ENCODE measurements at regions of chr6 and their contacts with region 1.

Region 1: DNA sequence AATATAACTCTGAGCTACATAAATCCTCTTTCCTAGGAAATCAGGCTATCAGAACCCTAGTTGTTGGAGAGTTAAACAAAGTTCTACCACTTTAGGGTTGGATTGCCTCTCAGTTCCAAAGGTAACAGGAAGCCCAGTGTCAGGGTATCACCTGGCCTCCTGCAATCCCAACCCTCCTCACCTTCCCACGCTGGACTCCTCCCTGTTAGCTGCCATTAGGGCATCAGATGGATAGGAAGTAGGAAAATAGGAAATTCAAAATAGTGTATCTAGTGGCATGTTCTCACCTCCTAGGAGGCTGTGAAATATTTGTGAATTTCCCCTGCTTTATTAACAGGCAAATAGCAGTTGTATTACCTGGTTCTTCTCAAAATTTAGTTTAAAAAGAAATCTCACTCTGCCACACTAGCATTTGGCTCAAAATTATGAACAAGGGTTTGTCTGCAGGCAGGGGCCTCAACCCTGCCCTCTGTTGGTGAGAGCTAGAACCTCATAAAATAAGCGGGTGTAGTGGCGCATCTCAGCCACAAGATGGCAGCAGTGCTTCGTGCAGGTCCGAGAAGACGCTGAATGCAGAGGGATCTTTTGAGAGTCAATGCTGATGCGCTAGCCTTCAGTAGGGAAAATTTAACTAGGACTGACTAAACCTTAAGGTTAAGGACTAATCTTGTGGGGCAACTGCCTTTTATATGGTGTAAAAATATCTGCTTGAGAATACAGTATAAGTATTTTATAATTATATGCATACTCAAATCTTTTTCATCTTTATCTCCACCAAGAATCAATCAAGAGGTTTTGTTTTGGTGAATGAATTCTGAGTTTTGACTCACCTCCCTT is 209.8 kb upstream of the KCNQ5 start:
- DNase-seq: peak; percentile 76
- H3K4me3 ChIP-seq: no peak overlapping the region
- H3K27ac ChIP-seq: no peak overlapping the region
- H3K4me1 ChIP-seq: peaks cover 6% of the 10 kb centered on the region
- CTCF ChIP-seq: peak; percentile 100

Region 2: GRCh38 chr6:72580281-72580940 is 168.3 kb after region 1 on chr6:
- CTCF ChIA-PET with region 1: no interaction called
- POLR2A ChIA-PET with region 1: no interaction called
- intact Hi-C with region 1: loop called (anchors 10 kb)
- DNase-seq: peak; percentile 41
- H3K4me3 ChIP-seq: no peak overlapping the region
- H3K27ac ChIP-seq: no peak overlapping the region
- H3K4me1 ChIP-seq: no peaks in the 10 kb centered on the region
- CTCF ChIP-seq: peak; percentile 69

Region 3: GRCh38 chr6:72616406-72617015 is 204.4 kb after region 1 on chr6:
- CTCF ChIA-PET with region 1: no interaction called
- POLR2A ChIA-PET with region 1: no interaction called
- intact Hi-C with region 1: loop called (anchors 2 kb)
- DNase-seq: peak; percentile 66
- H3K4me3 ChIP-seq: no peak overlapping the region
- H3K27ac ChIP-seq: no peak overlapping the region
- H3K4me1 ChIP-seq: peaks cover 25% of the 10 kb centered on the region
- CTCF ChIP-seq: peak; percentile 95

Region 4: GRCh38 chr6:73129653-73130443 is 717.8 kb after region 1 on chr6:
- CTCF ChIA-PET with region 1: no interaction called
- POLR2A ChIA-PET with region 1: no interaction called
- intact Hi-C with region 1: loop called (anchors 2 kb)
- DNase-seq: peak; percentile 44
- H3K4me3 ChIP-seq: no peak overlapping the region
- H3K27ac ChIP-seq: no peak overlapping the region
- H3K4me1 ChIP-seq: no peaks in the 10 kb centered on the region
- CTCF ChIP-seq: peak; percentile 92

Region 5: DNA sequence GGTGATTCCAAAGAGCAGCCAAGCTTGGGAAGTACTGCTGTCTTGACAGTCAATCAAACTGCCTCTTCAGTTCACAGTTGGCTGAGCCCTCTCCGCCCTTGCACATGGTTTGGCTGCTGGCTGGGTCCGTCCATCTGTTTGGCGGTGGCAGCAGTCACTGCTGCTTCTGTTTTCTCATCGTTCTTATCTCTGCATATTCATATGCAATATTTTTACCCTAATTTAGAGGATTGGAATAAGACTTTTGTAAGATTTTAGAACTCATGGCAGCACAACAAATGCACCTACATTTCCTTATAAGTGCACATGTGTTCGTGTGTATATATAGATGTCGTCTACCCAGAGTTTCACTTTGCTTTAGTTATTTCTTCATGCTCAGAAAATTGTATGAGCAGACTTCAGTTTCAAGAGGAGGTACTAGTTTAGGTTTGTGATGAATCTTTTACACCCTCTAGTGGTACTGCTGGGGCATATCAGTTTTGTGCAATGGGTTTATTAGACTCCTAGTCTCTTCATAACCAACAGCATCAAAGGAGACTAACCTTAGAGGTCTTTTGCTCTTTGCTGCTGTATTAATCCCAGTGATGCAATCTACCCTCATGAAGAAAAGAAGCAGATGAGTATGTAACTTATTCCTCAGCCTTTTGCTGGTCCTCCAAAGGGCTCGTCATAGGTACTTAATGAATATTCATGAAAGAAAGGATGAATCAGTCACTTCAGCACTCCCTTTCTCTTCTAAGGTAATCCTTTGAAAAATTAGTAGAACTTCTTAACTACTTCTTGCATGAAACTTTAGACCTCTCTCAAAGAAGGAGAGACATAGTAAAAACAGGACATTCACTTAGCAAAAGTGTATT is 768.9 kb after region 1 on chr6:
- CTCF ChIA-PET with region 1: interaction called, 4 read pairs
- POLR2A ChIA-PET with region 1: no interaction called
- intact Hi-C with region 1: loop called (anchors 1 kb)
- DNase-seq: peak; percentile 81
- H3K4me3 ChIP-seq: peak overlapping the region; percentile 48
- H3K27ac ChIP-seq: peak overlapping the region; percentile 46
- H3K4me1 ChIP-seq: peaks cover 54% of the 10 kb centered on the region
- CTCF ChIP-seq: peak; percentile 97

Region 6: GRCh38 chr6:73329201-73329600 is 917.1 kb after region 1 on chr6:
- CTCF ChIA-PET with region 1: no interaction called
- POLR2A ChIA-PET with region 1: interaction called, 5 read pairs
- intact Hi-C with region 1: loop called (anchors 1 kb)
- DNase-seq: no peak
- H3K4me3 ChIP-seq: no peak overlapping the region
- H3K27ac ChIP-seq: no peak overlapping the region
- H3K4me1 ChIP-seq: peaks cover 5% of the 10 kb centered on the region
- CTCF ChIP-seq: no peak

Measured in OCI-LY7 (cell line).